ENCODE measurements at regions of chr19 and their contacts with region 1.

Region 1: GRCh38 chr19:1364070-1364704 is 19.5 kb upstream of the NDUFS7 start:
- DNase-seq: peak in 2 of 3 donors; percentile 55 to 56
- H3K4me3 ChIP-seq: peak overlapping the region in 4 of 7 experiments; percentile 19 to 61 (median 38)
- H3K27ac ChIP-seq: peak overlapping the region in 1 of 2 experiments; percentile 55
- H3K4me1 ChIP-seq: peaks cover 7 to 66% (median 64%) of the 10 kb centered on the region in 4 experiments
- H3K27me3 ChIP-seq: no peaks in the 10 kb centered on the region

Region 2: DNA sequence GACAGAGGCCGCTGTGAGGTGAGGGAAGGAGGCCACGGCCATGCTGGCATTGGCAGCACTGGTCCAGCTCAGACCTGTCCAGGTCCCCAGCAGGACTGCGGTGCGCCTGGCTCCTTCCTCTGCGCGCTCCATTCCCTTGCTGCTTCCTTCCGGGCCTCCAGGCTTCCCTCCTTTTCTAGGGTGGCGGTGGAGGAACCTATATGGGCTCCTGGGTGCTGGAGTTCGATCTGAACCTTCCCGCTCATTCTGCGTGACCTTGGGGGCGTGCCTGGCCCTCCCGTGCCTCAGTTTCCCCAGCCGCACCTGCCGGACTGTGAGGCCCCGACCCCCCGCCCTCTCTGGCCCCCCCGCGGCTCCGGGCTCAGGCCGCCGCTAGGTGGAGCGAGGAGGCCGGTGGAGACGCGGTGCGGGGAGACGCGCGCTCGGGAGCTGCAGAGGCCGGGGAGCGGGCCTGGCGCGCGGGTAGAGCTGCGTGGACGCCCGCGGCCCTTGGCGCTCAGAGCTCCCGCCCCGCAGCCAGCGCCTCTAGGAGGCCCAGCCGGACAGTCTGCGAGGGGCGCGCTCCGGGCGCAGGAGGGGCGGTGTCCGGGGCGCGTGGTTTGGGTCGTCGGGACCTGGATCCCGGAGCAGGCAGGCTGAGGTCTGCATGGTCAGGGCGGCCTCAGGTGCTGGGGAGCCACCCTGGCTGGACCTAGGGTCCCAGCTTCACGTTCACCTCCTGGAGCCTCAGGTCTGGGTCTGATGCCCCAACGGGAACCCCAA is 48.5 kb before region 1 on chr19:
- CTCF ChIA-PET with region 1: interaction called, 10 read pairs
- POLR2A ChIA-PET with region 1: no interaction called
- DNase-seq: peak; percentile 27 to 31 (median 28)
- H3K4me3 ChIP-seq: peak overlapping the region in 2 of 7 experiments; percentile 55 to 59
- H3K27ac ChIP-seq: no peak overlapping the region
- H3K4me1 ChIP-seq: peaks cover 0 to 9% (median 7%) of the 10 kb centered on the region in 4 experiments
- H3K27me3 ChIP-seq: peaks cover 5 to 37% (median 13%) of the 10 kb centered on the region in 5 experiments

Region 3: DNA sequence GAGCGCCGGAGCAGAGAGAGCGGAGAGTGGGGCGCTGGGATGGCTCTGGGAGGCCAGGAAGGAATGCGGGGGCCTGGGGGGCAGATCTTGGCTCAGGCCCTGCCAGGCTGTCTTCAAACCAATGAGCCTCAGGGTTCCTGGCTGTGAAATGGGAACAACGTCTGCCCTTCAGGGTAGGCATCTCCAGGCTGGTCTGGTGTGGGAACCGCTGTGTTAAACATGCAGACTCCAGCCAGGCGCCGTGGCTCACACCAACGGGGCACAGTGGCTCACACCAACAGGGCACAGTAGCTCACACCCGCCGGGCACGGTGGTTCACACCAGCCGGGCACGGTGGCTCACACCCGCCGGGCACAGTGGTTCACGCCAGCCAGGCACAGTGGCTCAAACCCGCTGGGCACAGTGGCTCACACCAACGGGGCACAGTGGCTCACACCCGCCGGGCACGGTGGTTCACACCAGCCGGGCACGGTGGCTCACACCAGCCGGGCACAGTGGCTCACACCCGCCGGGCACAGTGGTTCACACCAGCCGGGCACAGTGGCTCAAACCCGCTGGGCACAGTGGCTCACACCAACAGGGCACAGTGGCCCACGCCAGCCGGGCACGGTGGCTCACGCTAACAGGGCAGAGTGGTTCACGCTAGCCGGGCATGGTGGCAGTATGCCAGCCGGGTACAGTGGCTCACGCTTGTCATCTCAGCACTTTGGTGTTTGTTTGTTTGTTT is 38.5 kb before region 1 on chr19:
- CTCF ChIA-PET with region 1: no interaction called
- POLR2A ChIA-PET with region 1: no interaction called
- DNase-seq: no peak
- H3K4me3 ChIP-seq: peak overlapping the region in 3 of 7 experiments; percentile 26 to 74 (median 62)
- H3K27ac ChIP-seq: no peak overlapping the region
- H3K4me1 ChIP-seq: peaks cover 0 to 12% (median 10%) of the 10 kb centered on the region in 4 experiments
- H3K27me3 ChIP-seq: peaks cover 0 to 33% (median 16%) of the 10 kb centered on the region in 5 experiments

Region 4: DNA sequence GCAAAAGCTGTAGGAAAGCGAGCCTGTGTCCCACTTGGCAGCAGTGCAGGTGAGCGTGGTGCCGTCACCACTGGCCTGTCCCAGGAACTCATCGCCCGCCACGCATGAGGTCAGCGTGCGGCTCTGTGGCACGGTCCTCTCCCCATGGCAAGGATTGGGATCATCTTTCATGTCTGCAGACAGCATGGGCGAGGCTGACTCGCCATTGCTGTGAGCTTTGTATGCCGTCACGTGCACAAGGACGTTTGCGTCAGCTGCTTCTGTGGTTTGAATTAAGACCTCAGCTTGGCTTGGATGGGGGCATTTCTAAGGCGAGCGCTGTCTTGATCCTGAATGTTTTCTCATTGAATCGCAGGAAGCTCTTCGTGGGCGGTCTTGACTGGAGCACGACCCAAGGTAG is 53.0 kb after region 1 on chr19:
- CTCF ChIA-PET with region 1: no interaction called
- POLR2A ChIA-PET with region 1: no interaction called
- DNase-seq: no peak
- H3K4me3 ChIP-seq: no peak overlapping the region
- H3K27ac ChIP-seq: no peak overlapping the region
- H3K4me1 ChIP-seq: peaks cover 0 to 22% (median 17%) of the 10 kb centered on the region in 4 experiments
- H3K27me3 ChIP-seq: no peaks in the 10 kb centered on the region

Measured in common myeloid progenitor, CD34-positive (primary cell).